ENCODE measurements at regions of chr17 and their contacts with region 1.

Region 1: DNA sequence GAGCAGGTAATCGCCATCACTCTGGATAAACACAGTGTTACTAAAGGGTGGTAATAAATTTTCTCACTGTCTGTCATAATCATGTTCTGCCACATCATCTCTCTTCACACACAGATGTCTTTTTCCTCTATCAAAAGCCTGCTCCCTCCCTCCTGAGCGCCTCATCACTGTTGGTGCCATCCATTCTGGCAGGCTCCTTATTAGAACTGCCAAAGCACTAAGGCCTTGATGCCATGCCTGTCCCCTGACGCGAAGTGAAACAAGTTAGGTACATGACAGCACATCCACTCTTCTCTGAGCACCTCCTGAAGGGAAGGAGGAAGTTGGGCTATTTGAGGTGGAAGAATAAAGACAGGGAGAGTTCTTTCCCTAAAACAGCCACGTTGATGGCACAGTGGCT is 38.2 kb upstream of the AXIN2 start:
- DNase-seq: no peak
- ATAC-seq: peak in 1 of 8 donors; percentile 62
- H3K4me3 ChIP-seq: no peak overlapping the region
- H3K27ac ChIP-seq: no peak overlapping the region
- H3K4me1 ChIP-seq: peaks cover 0 to 8% (median 0%) of the 10 kb centered on the region in 9 donors
- H3K27me3 ChIP-seq: no peaks in the 10 kb centered on the region
- CTCF ChIP-seq: no peak

Region 2: DNA sequence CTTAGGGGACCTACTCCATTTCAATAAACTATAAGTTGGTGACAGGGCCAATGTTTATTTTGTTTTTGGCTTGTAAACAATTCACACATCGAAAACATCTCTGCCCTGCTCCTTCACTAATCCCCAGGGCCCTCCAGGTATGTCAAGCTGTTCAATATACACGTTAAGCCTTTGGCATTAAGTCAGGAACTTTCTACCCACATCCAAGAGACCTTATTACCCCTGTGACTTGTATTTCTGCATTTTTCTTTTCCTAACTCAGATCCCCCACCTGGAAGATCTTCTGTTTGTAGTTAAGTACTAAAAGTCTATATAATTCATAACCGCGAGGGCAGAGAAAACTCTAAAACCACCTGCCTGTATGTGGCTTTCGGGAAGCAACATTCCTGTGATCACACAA is 68.6 kb after region 1 on chr17:
- intact Hi-C with region 1: loop called in 1 of 10 experiments (anchors 2 kb)
- DNase-seq: no peak
- ATAC-seq: no peak
- H3K4me3 ChIP-seq: no peak overlapping the region
- H3K27ac ChIP-seq: no peak overlapping the region
- H3K4me1 ChIP-seq: no peaks in the 10 kb centered on the region
- H3K27me3 ChIP-seq: no peaks in the 10 kb centered on the region
- CTCF ChIP-seq: no peak